Activated B cell treated with CpG ODN at 0.5 μM for 24 hours (primary cell): ENCODE measurements at regions of chr11 and their contacts with region 1.

Region 1: GRCh38 chr11:6531267-6531752 is 34.2 kb downstream of the DNHD1 start:
- DNase-seq: no peak
- ATAC-seq: peak; percentile 60
- H3K4me3 Mint-ChIP-seq: no peak overlapping the region
- H3K27ac Mint-ChIP-seq: no peak overlapping the region
- H3K4me1 Mint-ChIP-seq: peaks cover 6% of the 10 kb centered on the region
- H3K27me3 Mint-ChIP-seq: no peaks in the 10 kb centered on the region
- CTCF ChIP-seq: peak; percentile 35

Region 2: GRCh38 chr11:6541356-6541755 is 10.0 kb after region 1 on chr11:
- CTCF ChIA-PET with region 1: interaction called, 12 read pairs
- POLR2A ChIA-PET with region 1: no interaction called
- intact Hi-C with region 1: no loop called
- DNase-seq: no peak
- ATAC-seq: no peak
- H3K4me3 Mint-ChIP-seq: no peak overlapping the region
- H3K27ac Mint-ChIP-seq: no peak overlapping the region
- H3K4me1 Mint-ChIP-seq: no peaks in the 10 kb centered on the region
- H3K27me3 Mint-ChIP-seq: no peaks in the 10 kb centered on the region
- CTCF ChIP-seq: no peak

Region 3: DNA sequence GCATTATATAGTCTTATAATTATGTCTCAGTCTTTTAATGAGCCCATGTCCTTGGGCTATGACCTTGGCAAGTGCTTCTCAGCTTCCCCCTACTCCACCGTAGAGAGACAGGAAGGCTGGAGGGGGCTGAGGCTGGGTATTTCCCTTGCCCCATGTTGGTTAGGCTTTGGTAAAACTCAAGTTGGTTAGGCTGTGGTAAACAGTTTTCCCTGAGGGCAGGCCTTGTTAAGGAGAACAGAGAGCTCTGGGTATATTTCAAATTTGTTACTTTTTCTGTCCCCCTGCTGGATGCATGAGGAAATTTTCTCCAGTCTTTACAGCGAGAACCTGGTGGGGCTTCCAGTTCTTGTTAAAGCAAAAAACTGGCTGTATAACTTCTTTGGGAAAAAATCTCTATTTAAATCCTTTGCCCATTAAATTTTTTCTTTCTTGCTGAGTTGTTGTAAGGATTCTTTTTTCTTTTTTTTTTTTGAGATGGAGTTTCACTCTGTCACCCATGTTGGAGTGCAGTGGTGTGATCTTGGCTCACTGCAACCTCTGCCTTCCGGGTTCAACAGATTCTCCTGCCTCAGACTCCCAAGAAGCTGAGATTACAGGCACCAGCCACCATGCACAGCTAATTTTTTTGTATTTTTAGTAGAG is 136.5 kb after region 1 on chr11:
- CTCF ChIA-PET with region 1: interaction called, 33 read pairs
- POLR2A ChIA-PET with region 1: no interaction called
- intact Hi-C with region 1: loop called (anchors 1 kb)
- DNase-seq: no peak
- ATAC-seq: peak; percentile 83
- H3K4me3 Mint-ChIP-seq: no peak overlapping the region
- H3K27ac Mint-ChIP-seq: no peak overlapping the region
- H3K4me1 Mint-ChIP-seq: peaks cover 4% of the 10 kb centered on the region
- H3K27me3 Mint-ChIP-seq: peaks cover 2% of the 10 kb centered on the region
- CTCF ChIP-seq: no peak

Region 4: GRCh38 chr11:6705905-6706535 is 174.7 kb after region 1 on chr11:
- CTCF ChIA-PET with region 1: interaction called, 50 read pairs
- POLR2A ChIA-PET with region 1: no interaction called
- intact Hi-C with region 1: loop called (anchors 1 kb)
- DNase-seq: no peak
- ATAC-seq: peak; percentile 66
- H3K4me3 Mint-ChIP-seq: no peak overlapping the region
- H3K27ac Mint-ChIP-seq: peak overlapping the region; percentile 60
- H3K4me1 Mint-ChIP-seq: peaks cover 19% of the 10 kb centered on the region
- H3K27me3 Mint-ChIP-seq: no peaks in the 10 kb centered on the region
- CTCF ChIP-seq: peak; percentile 92